ENCODE measurements at regions of chr10 and their contacts with region 1.

Region 1: DNA sequence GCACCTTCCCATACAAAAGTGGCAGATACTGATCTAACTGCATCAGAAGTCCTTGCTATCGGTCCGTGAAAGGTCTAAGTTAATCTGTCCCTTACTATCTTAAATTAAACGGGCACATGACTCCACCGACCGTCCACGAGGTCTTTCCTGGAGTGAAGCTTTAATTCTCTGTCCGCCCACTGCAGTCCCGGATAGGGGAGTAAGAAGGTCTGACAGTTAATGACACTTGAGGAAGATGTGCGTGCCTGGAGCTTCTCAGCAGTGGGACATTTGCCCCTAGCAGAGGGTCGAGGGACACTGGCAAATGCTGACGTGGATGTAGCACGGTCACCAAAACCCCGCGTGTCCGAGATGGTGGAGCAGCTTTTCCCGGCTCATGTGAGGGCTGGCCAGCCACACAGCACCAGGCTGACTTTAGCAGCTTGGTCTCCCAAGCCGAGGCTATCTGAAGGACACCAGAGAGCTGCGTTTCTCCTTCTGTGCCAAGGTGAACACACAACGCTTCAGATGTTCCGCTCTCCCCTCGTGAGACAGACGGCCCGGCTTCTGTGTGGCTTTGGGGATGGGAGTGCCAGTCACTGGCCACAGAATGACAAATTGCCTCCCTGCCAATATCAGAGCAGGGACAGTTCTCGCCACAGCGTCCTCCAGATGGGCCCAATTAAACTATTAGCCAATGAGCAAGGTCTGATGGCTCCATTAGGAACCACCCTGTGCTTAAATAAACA is 86.6 kb downstream of the ADARB2 start:
- DNase-seq: no peak
- H3K4me3 ChIP-seq: no peak overlapping the region
- H3K27ac ChIP-seq: no peak overlapping the region
- H3K4me1 ChIP-seq: no peaks in the 10 kb centered on the region
- H3K27me3 ChIP-seq: no peaks in the 10 kb centered on the region
- CTCF ChIP-seq: no peak

Region 2: GRCh38 chr10:1526144-1527050 is 124.3 kb before region 1 on chr10:
- CTCF ChIA-PET with region 1: no interaction called
- dilution Hi-C with region 1: no loop called
- in situ Hi-C with region 1: no loop called
- intact Hi-C with region 1: no loop called
- DNase-seq: no peak
- H3K4me3 ChIP-seq: no peak overlapping the region
- H3K27ac ChIP-seq: no peak overlapping the region
- H3K4me1 ChIP-seq: no peaks in the 10 kb centered on the region
- H3K27me3 ChIP-seq: no peaks in the 10 kb centered on the region
- CTCF ChIP-seq: no peak

Region 3: GRCh38 chr10:1754506-1755153 is 103.9 kb after region 1 on chr10:
- CTCF ChIA-PET with region 1: no interaction called
- dilution Hi-C with region 1: loop called (anchors 5 kb)
- in situ Hi-C with region 1: no loop called
- intact Hi-C with region 1: no loop called
- DNase-seq: no peak
- H3K4me3 ChIP-seq: no peak overlapping the region
- H3K27ac ChIP-seq: no peak overlapping the region
- H3K4me1 ChIP-seq: no peaks in the 10 kb centered on the region
- H3K27me3 ChIP-seq: no peaks in the 10 kb centered on the region
- CTCF ChIP-seq: no peak

Measured in mammary epithelial cell (primary cell).